Cardiac septum (tissue), 1 donor: ENCODE measurements at regions of chr2 and their contacts with region 1.

Region 1: GRCh38 chr2:121755236-121756111 is at the start of gene TSN:
- DNase-seq: peak; percentile 98
- total RNA-seq, gene TSN: 43.9 TPM

Region 2: DNA sequence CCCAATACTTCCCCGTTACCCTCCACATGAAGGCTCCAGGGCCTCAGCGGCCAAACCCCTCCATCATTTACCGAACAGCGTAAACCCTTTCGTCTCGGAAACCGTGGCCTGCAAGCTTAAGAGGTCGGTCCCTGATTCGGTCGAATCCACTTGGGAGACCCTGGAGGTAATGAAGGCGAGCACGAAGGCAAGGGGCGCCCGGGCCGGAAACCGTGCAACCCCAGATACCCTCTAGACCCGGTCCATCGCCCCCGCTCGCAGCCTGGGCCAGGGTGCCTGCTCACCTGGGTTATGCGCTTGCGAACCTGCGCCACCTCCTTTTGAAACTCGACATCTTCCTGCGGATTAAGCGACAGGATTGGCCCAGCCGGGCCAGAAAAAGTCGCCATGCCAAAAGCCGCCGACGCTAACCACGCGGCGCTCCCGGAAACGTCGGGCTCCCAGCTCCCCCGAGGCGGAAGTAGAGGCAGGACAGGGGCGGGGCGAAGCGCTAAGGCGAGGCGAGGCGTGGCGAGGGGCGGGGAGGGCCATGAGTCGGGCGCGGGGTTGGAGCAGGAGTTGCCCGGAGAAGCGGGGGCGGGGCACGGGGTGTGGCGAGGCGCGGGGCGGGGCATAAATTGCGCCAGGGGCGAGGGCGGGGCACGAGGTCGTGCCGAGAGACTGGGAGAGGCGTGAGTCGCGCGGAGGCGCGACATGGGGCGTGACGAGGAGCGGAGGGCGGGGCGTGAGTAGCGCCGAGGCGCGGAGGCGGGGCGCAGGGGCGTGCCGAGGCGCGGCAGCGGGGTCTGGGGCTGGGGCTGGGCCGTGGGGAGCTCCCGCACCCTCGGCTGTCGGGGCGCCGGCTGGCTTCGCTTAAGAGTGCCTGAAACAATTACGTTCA is 18.8 kb before region 1 on chr2 and contains the start of gene NIFK:
- intact Hi-C with region 1: loop called (anchors 1 kb)
- DNase-seq: peak; percentile 100
- total RNA-seq, gene NIFK: 28.8 TPM